Activated naive CD8-positive, alpha-beta T cell treated with anti-CD3 and anti-CD28 coated beads, Interleukin-2, amount 10 ng/mL, durations not matched to agents 7 days and 5 days (primary cell): ENCODE measurements at regions of chr16 and their contacts with region 1.

Region 1: GRCh38 chr16:11915644-11916523 is at the start of gene GSPT1:
- DNase-seq: peak; percentile 99
- ATAC-seq: peak; percentile 95
- H3K4me3 Mint-ChIP-seq: peak within 1 kb of the TSS; percentile 92
- H3K27ac Mint-ChIP-seq: peak within 1 kb of the TSS; percentile 95
- H3K4me1 Mint-ChIP-seq: peaks cover 28% of the 10 kb centered on the region
- H3K27me3 Mint-ChIP-seq: peaks cover 6% of the 10 kb centered on the region
- total RNA-seq, gene GSPT1: 88.3 to 90.7 TPM

Region 2: DNA sequence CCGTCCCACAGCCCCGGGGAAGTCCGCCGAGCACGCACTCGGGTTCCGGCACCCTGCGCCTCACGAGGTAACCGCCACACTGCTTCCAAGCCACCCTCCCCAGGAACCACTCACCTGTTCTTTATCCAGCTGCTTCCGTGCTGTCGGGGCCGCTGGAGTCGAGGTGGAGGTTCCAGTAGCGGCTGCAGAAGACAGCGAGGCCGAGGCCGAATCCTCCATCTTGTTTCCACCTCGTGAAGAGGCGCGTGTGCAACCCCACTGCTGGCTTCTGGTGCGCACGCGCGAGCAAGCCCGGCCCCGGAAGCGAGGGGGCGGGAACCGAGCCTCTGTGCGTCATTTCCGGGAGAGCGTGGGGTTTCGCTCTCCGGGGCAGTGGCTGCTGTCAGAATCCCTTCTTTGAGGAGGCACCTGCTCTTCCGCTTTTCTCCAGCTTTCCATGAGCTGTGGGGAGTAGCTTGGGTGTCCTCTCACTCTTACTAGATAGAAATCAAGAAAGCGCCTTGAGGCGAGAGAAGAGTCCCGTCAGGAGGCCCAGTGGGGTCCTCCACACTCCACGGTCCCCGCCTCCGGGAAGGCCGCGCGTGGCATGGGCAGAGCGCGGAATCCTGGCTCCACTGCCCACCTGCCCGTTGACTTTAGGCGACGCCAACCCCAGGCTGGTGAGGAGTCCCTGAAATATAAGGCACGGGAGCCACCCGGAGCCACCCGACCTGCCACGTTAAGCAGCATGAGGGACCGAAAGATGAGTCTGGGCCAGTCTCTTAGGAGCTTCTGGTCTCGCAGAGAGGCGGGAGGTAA is 64.4 kb before region 1 on chr16 and contains the start of gene RSL1D1:
- POLR2A ChIA-PET with region 1: interaction called, 10 read pairs
- DNase-seq: peak; percentile 98
- ATAC-seq: peak; percentile 85
- H3K4me3 Mint-ChIP-seq: peak within 1 kb of the TSS; percentile 97
- H3K27ac Mint-ChIP-seq: peak within 1 kb of the TSS; percentile 97
- H3K4me1 Mint-ChIP-seq: peaks cover 28% of the 10 kb centered on the region
- H3K27me3 Mint-ChIP-seq: no peaks in the 10 kb centered on the region
- total RNA-seq, gene RSL1D1: 159 to 165 TPM

Region 3: GRCh38 chr16:11977376-11978041 is 61.6 kb after region 1 on chr16:
- POLR2A ChIA-PET with region 1: interaction called, 14 read pairs
- DNase-seq: no peak
- ATAC-seq: no peak
- H3K4me3 Mint-ChIP-seq: peak overlapping the region; percentile 90
- H3K27ac Mint-ChIP-seq: peak overlapping the region; percentile 81
- H3K4me1 Mint-ChIP-seq: peaks cover 31% of the 10 kb centered on the region
- H3K27me3 Mint-ChIP-seq: no peaks in the 10 kb centered on the region

Region 4: GRCh38 chr16:12026741-12027490 is 111.0 kb after region 1 on chr16:
- POLR2A ChIA-PET with region 1: no interaction called
- DNase-seq: no peak
- ATAC-seq: no peak
- H3K4me3 Mint-ChIP-seq: no peak overlapping the region
- H3K27ac Mint-ChIP-seq: no peak overlapping the region
- H3K4me1 Mint-ChIP-seq: peaks cover 4% of the 10 kb centered on the region
- H3K27me3 Mint-ChIP-seq: no peaks in the 10 kb centered on the region